HEK293T (cell line): ENCODE measurements at regions of chr10 and their contacts with region 1.

Region 1: GRCh38 chr10:96129387-96130325 is at the start of gene ZNF518A:
- DNase-seq: peak; percentile 87

Region 2: DNA sequence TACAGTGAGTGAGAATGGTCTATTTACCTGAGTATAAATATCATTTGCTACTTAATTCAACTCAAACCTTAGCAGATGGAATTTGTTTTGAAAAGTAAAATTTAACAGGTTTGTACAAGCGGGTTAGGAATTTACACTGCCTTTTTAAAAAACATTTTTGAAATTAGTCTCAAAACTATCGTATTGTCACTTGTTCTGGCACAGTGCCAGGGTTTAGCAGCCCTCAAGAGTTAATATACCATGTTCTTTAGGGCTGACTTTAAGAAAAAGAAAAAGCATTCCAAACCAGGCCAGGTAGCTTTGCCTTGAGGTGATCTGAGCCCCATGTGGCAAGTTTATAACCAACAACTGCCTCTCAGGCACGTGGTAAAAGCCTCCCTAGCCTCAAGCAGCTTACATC is 68.4 kb before region 1 on chr10:
- CTCF ChIA-PET with region 1: no interaction called
- POLR2A ChIA-PET with region 1: interaction called, 13 read pairs
- DNase-seq: no peak

Region 3: DNA sequence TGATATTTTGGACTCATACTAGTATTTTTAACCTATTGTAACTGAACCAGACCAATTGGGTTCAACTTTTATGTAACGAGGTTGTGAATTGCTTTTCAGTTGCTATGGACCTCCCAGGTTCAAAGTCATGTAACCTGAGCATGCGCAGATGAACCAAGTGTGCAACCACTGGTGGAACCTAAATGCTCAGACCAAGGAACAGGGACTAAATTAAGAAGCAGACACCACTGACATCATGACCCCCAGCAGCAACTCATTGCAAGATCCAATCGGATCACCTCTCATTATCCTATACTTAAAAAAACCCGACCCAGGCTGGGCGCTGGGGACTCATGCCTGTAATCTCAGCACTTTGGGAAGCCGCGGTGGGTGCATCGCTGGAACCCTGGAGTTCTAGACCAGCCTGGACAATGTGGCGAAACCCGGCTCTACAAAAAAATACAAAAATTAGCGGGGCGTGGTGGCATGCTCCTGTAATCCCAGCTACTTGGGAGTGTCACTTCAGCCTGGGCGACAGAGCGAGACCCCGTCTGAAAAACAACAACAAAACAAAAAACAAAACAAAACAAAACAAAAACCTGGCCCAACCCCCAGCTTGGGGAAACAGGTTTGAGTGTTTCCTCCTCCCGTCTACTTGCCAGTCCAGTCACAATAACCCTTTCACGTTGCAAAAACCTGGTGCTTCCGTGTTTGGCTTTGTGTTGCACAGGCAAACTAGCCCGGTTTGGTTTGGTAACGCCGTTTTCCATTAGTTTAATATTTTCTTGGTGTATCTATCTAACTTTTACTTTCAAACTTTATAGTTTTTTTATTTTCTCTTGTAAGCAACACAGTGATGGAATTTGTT is 10.8 kb before region 1 on chr10:
- CTCF ChIA-PET with region 1: no interaction called
- POLR2A ChIA-PET with region 1: interaction called, 15 read pairs
- DNase-seq: no peak

Region 4: GRCh38 chr10:96176985-96177384 is 47.3 kb after region 1 on chr10:
- CTCF ChIA-PET with region 1: no interaction called
- POLR2A ChIA-PET with region 1: no interaction called
- DNase-seq: no peak